PC-9 (cell line): ENCODE measurements at regions of chr1 and their contacts with region 1.

Region 1: DNA sequence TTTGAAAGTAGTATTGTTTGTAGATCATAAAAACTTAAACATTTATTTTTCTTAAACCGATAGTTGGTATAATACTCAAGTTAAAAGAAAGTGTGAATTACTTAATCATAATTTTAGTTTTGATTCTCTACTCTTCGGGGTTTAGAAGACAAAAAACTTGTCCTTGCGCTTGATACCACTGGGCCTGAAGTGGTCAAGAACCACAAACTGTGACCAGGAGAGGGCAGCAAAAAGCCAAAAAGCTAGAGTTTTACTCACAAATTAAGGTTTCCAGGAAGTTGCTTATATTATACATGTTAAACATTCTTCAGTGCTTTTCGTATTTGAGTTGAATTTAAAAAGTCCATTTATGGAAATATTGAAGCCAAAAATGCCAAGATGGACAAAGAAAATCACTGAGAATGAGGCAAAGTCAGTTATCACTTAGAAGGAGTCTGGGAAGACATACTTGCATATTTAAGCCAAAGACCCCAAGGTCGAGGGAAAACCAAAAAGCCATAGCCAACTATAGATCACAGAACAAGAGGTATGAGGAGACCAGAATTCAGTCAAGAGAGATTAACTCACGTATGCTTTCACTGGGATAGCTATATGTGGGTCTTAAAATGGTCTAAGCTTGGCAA is 34.2 kb downstream of the EFCAB7 start:
- DNase-seq: peak in 1 of 2 experiments; percentile 43
- H3K4me3 ChIP-seq: no peak overlapping the region
- H3K27ac ChIP-seq: no peak overlapping the region
- H3K4me1 ChIP-seq: no peaks in the 10 kb centered on the region
- H3K27me3 ChIP-seq: no peaks in the 10 kb centered on the region
- CTCF ChIP-seq: peak; percentile 72

Region 2: GRCh38 chr1:64129701-64130100 is 572.2 kb after region 1 on chr1:
- CTCF ChIA-PET with region 1: interaction called, 16 read pairs
- POLR2A ChIA-PET with region 1: no interaction called
- intact Hi-C with region 1: no loop called
- DNase-seq: no peak
- H3K4me3 ChIP-seq: no peak overlapping the region
- H3K27ac ChIP-seq: no peak overlapping the region
- H3K4me1 ChIP-seq: peaks cover 24% of the 10 kb centered on the region
- H3K27me3 ChIP-seq: no peaks in the 10 kb centered on the region
- CTCF ChIP-seq: no peak